ENCODE measurements at regions of chr16 and their contacts with region 1.

Region 1: GRCh38 chr16:69276148-69277115 is 34.7 kb upstream of the VPS4A start:
- DNase-seq: no peak
- ATAC-seq: no peak
- H3K4me3 ChIP-seq: no peak overlapping the region
- H3K27ac ChIP-seq: no peak overlapping the region
- H3K4me1 ChIP-seq: no peaks in the 10 kb centered on the region
- H3K27me3 ChIP-seq: no peaks in the 10 kb centered on the region
- CTCF ChIP-seq: no peak

Region 2: DNA sequence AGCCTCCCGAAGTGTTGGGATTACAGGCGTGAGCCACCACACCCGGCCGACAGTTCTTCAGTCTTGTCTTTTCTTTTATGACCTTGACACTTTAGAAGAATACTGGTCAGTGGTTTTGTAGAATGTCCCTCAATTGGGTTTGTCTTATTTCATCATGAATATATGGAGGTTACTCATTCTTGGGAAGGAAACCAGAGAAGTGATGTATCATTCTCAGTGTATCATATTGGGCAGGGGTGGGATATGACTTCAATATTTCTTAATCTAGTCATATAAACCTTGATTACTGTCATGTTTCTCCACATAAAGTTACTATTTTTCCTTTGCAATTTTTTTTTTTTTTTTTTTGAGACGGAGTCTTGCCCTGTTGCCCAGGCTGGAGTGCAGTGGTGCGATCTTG is 52.5 kb before region 1 on chr16:
- CTCF ChIA-PET with region 1: no interaction called
- POLR2A ChIA-PET with region 1: no interaction called
- intact Hi-C with region 1: loop called (anchors 10 kb)
- DNase-seq: peak; percentile 41
- ATAC-seq: no peak
- H3K4me3 ChIP-seq: no peak overlapping the region
- H3K27ac ChIP-seq: no peak overlapping the region
- H3K4me1 ChIP-seq: peaks cover 24% of the 10 kb centered on the region
- H3K27me3 ChIP-seq: no peaks in the 10 kb centered on the region
- CTCF ChIP-seq: no peak